Posterior vena cava (tissue), 2 donors: ENCODE measurements at regions of chr4 and their contacts with region 1.

Region 1: DNA sequence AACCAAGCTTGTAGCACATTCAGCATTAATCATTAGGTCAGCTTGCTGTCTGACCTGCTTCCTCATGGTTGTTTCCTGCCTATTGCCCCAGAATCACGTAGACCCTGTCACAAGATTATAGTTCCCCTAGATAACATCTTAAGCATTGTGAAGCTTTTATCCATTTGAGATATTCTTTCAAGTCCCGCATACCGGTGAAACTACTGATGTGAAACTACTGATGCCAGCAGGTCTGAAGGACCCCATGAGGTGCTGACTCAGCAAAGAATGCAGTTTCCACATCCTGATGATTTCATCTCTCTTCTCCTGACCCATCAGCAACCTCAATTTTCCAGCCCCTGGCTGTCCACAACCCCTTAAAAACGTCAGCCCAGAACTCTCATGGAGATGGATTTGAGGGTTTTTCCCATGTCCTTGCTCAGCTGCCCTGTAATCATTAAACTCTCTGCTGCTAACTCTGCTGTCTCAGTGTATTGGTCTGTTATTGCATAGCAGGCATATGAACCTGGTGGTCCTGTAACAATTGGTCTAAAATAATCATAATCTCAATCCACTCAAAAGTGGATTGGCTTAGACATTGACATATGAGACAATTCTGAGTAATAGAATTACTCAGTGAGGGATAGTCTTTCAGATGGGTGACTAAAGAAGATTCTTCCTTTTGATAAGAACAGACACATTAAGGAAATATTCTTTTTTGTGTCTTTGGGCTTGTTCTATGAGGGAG is 26.3 kb upstream of the UBA6 start:
- DNase-seq: no peak

Region 2: GRCh38 chr4:67393699-67394281 is 333.5 kb before region 1 on chr4:
- intact Hi-C with region 1: loop called in 1 of 2 experiments (anchors 5 kb)
- DNase-seq: no peak

Region 3: DNA sequence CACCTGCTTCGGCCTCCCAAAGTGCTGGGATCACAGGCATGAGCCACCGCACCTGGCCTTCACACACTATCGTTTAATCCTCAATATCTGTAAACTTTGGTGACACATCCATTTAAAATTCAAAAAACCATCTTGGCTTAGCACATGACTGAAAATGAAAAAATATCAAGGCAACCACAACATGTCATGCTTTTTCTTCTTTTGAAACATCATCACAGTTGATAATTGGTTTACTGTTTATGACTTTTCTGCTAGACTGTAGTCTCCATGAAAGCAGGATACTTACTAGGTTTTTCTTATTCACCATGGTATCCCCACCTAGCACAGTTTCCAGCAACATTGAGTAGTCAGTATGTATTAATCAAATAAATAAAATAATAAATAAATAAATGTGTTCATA is 15.9 kb after region 1 on chr4:
- intact Hi-C with region 1: no loop called
- DNase-seq: no peak

Region 4: GRCh38 chr4:69467797-69468196 is 1740.5 kb after region 1 on chr4:
- intact Hi-C with region 1: no loop called
- DNase-seq: no peak